Posterior vena cava (tissue), 2 donors: ENCODE measurements at regions of chr4 and their contacts with region 1.

Region 1: GRCh38 chr4:74304121-74304628 is 4.1 kb upstream of the EPGN start:
- DNase-seq: no peak

Region 2: GRCh38 chr4:73593631-73594241 is 710.4 kb before region 1 on chr4:
- intact Hi-C with region 1: loop called in 1 of 2 experiments (anchors 5 kb)
- DNase-seq: no peak

Region 3: DNA sequence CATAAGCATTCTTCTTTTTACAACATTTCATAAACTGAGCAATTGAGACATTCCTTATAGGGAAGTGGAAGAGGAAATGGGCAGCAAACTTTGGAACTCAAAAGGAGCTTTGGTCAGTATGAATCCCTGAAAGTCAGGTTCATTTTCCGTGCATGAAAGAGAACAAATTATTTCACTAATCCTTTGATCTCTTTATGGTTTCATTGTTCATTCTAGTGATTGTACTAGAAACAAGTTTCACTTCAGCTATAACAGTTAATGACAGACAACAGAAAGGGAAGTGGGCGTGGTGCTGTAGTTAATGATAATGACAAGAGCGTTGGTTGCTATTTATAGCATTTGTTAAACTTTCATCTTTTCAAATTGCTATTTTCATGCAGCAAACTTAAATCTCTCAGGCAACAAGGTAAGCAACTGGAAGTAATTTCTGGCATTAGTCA is 239.1 kb after region 1 on chr4:
- intact Hi-C with region 1: no loop called
- DNase-seq: no peak

Region 4: GRCh38 chr4:74738470-74739140 is 434.4 kb after region 1 on chr4:
- intact Hi-C with region 1: no loop called
- DNase-seq: no peak